HCT116 (cell line): ENCODE measurements at regions of chr7 and their contacts with region 1.

Region 1: DNA sequence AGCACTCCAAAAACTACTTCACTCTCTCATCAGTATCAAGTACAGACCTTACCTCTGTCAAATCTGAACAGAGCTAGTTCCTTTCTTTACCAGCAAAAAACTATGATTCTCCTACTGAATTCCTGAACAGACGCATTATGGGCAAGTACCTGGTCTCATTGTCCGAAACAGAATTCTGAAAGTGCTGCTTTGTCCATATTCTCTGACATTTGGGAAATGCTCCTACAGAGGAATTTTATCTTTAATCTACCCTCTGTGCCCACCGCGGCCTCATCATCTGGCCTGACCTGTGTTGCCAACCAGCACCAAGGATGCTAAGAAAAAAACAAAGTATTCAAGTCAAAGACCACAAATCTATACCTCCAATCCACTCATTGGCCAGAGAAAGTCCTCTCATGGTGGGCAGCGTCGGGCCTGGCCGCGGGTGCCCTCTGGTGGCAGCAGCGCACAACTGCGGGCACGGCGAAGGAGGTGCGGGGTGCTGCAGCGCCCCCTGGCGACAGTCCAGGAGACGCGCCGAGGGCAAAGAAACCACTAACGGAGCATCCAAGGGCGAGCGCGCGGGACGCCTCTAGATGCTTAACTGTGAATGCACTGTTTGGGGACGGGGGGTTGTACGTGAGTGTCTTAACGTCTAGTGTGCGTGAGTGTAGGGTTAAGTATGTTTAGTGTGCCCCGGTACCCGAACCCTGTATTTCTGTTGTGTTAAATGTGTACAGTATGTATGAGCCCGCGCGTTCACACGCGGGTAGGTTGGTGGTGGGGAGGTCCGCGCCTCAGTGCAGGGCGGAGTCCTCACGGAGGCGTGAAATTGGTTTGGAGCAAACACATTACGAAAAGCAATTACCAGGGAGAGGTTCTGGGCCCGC is 5.0 kb upstream of the GBX1 start:
- DNase-seq: peak; percentile 61
- ATAC-seq: peak; percentile 63
- H3K4me3 ChIP-seq: no peak overlapping the region
- H3K27ac ChIP-seq: no peak overlapping the region
- H3K4me1 ChIP-seq: peaks cover 0 to 5% of the 10 kb centered on the region in 2 experiments; a peak in 1 of 4 replicates
- H3K27me3 ChIP-seq: no peaks in the 10 kb centered on the region
- CTCF ChIP-seq: peak; percentile 100
- POLR2A ChIP-seq: no peak
- RAD21 ChIP-seq: peak; percentile 98

Region 2: GRCh38 chr7:150778738-150779301 is 393.7 kb before region 1 on chr7:
- CTCF ChIA-PET with region 1: no interaction called
- POLR2A ChIA-PET with region 1: no interaction called
- RAD21 ChIA-PET with region 1: no interaction called
- intact Hi-C with region 1: loop called (anchors 5 kb)
- DNase-seq: peak; percentile 68
- ATAC-seq: peak; percentile 95
- H3K4me3 ChIP-seq: peak overlapping the region in 1 of 2 experiments; percentile 34; a peak in 1 of 4 replicates
- H3K27ac ChIP-seq: no peak overlapping the region
- H3K4me1 ChIP-seq: peaks cover 0 to 4% of the 10 kb centered on the region in 2 experiments; a peak in 2 of 4 replicates
- H3K27me3 ChIP-seq: 0 out of 2 replicates have a peak, but pooled peaks cover 8% of the 10 kb centered on the region
- CTCF ChIP-seq: peak; percentile 77 to 93 (median 93)
- POLR2A ChIP-seq: no peak
- RAD21 ChIP-seq: peak; percentile 87

Region 3: DNA sequence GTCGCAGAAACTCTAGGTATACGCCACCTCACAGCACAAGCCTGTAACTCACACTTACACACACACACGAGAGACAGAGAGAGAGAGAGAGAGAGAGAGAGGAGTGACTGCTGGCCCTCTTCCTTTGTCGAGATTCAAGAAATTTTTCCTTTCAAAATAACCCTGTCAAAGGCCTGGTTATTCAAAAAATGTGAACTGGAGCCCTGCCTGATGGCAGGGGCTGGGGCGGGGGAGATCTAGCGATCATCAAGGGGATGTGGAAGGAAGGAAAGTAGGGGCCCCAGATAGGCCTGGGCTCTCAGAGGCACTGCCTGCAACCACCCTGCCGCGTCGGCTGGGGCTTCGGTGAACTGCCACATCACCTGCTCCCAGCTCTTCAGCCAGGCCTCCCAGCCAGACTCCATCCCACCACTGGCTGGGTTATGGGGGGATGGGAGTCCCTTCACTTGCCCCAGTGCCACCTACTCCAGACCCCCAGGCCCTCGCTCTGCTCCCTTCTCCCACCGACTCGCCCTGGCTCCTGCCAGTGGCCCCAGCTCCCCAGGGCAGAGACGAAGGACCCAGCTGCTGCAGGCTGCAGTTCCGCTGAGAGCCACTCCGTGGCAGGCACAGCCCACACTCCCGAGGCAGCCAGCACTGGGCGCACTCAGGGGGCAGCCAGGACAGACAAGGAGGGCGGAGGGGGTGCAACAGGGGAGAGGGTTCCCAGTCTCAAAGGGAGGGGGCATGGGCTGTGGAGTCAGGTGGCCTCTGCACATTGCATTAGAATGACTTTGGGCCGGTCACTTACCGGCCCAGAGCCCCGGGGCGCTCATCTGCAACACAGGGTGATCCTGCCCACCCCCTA is 209.7 kb before region 1 on chr7:
- CTCF ChIA-PET with region 1: no interaction called
- POLR2A ChIA-PET with region 1: no interaction called
- RAD21 ChIA-PET with region 1: no interaction called
- intact Hi-C with region 1: loop called (anchors 1 kb)
- DNase-seq: no peak
- ATAC-seq: peak; percentile 84
- H3K4me3 ChIP-seq: no peak overlapping the region
- H3K27ac ChIP-seq: no peak overlapping the region
- H3K4me1 ChIP-seq: peaks cover 20 to 27% of the 10 kb centered on the region in 2 experiments
- H3K27me3 ChIP-seq: no peaks in the 10 kb centered on the region
- CTCF ChIP-seq: peak; percentile 87 to 94 (median 90)
- POLR2A ChIP-seq: no peak
- RAD21 ChIP-seq: peak; percentile 91

Region 4: GRCh38 chr7:151123822-151124464 is 48.6 kb before region 1 on chr7:
- CTCF ChIA-PET with region 1: interaction called, 8 read pairs
- POLR2A ChIA-PET with region 1: no interaction called
- RAD21 ChIA-PET with region 1: no interaction called
- intact Hi-C with region 1: loop called (anchors 1 kb)
- DNase-seq: peak; percentile 66
- ATAC-seq: peak; percentile 95
- H3K4me3 ChIP-seq: no peak overlapping the region
- H3K27ac ChIP-seq: no peak overlapping the region; the same call in 1 of the 2 replicates
- H3K4me1 ChIP-seq: peaks cover 0 to 8% of the 10 kb centered on the region in 2 experiments; a peak in 1 of 4 replicates
- H3K27me3 ChIP-seq: no peaks in the 10 kb centered on the region
- CTCF ChIP-seq: peak; percentile 99
- POLR2A ChIP-seq: no peak
- RAD21 ChIP-seq: peak; percentile 93

Region 5: GRCh38 chr7:151687523-151688218 is 515.2 kb after region 1 on chr7:
- CTCF ChIA-PET with region 1: no interaction called
- POLR2A ChIA-PET with region 1: no interaction called
- RAD21 ChIA-PET with region 1: no interaction called
- intact Hi-C with region 1: no loop called
- DNase-seq: peak; percentile 92
- ATAC-seq: peak; percentile 94
- H3K4me3 ChIP-seq: peak overlapping the region; percentile 27 to 41
- H3K27ac ChIP-seq: peak overlapping the region; percentile 57
- H3K4me1 ChIP-seq: peaks cover 27 to 61% of the 10 kb centered on the region in 2 experiments
- H3K27me3 ChIP-seq: no peaks in the 10 kb centered on the region
- CTCF ChIP-seq: no peak
- POLR2A ChIP-seq: no peak
- RAD21 ChIP-seq: no peak